Activated B cell treated with CpG ODN at 0.5 μM for 24 hours (primary cell): ENCODE measurements at regions of chr11 and their contacts with region 1.

Region 1: GRCh38 chr11:34653826-34654490 is 33.1 kb downstream of the EHF start:
- DNase-seq: no peak
- ATAC-seq: peak; percentile 65
- H3K4me3 Mint-ChIP-seq: peak overlapping the region; percentile 56
- H3K27ac Mint-ChIP-seq: peak overlapping the region; percentile 80
- H3K4me1 Mint-ChIP-seq: peaks cover 54% of the 10 kb centered on the region
- H3K27me3 Mint-ChIP-seq: no peaks in the 10 kb centered on the region
- CTCF ChIP-seq: no peak

Region 2: GRCh38 chr11:34512840-34513681 is 140.9 kb before region 1 on chr11:
- CTCF ChIA-PET with region 1: interaction called, 3 read pairs
- POLR2A ChIA-PET with region 1: no interaction called
- intact Hi-C with region 1: loop called (anchors 2 kb)
- DNase-seq: peak; percentile 44
- ATAC-seq: peak; percentile 99
- H3K4me3 Mint-ChIP-seq: no peak overlapping the region
- H3K27ac Mint-ChIP-seq: no peak overlapping the region
- H3K4me1 Mint-ChIP-seq: no peaks in the 10 kb centered on the region
- H3K27me3 Mint-ChIP-seq: no peaks in the 10 kb centered on the region
- CTCF ChIP-seq: peak; percentile 35

Region 3: DNA sequence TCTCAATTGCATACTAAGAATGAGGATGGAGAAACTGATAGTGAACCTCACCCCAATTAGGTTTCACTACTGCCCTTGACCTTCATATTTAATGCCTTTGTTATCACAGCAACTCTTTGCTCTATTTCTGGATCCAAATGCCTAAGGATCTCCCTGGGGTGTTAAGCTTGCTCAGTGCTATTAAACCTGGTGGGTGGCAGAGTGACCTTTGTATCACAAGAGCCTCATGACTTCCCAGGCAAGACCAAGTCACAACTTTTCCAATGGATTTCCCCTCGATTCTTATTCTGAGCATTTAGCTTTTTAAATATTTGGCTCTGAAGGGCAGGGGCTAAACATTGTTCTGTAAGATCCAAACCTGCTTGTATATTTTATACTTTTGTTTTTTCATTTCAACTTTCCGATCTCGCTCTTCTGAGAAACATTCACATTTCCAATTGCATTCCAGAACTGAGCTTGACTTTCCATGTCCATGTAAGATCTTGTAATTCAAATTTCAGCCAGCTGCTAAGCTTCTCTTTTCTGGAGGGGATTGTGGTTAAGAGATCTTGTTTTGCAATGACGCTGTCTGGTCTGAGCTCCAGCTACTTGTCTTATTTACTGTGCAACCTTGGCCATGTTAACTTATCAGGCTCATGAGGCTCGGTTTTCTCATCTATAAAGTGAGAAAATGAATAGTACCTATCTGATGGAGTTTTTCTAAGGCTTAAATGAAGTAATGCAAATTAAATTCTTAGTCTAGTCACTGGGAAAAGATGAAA is 39.4 kb before region 1 on chr11:
- CTCF ChIA-PET with region 1: interaction called, 4 read pairs
- POLR2A ChIA-PET with region 1: interaction called, 38 read pairs
- intact Hi-C with region 1: loop called (anchors 1 kb)
- DNase-seq: no peak
- ATAC-seq: peak; percentile 53
- H3K4me3 Mint-ChIP-seq: peak overlapping the region; percentile 0
- H3K27ac Mint-ChIP-seq: peak overlapping the region; percentile 86
- H3K4me1 Mint-ChIP-seq: peaks cover 30% of the 10 kb centered on the region
- H3K27me3 Mint-ChIP-seq: no peaks in the 10 kb centered on the region
- CTCF ChIP-seq: no peak

Region 4: DNA sequence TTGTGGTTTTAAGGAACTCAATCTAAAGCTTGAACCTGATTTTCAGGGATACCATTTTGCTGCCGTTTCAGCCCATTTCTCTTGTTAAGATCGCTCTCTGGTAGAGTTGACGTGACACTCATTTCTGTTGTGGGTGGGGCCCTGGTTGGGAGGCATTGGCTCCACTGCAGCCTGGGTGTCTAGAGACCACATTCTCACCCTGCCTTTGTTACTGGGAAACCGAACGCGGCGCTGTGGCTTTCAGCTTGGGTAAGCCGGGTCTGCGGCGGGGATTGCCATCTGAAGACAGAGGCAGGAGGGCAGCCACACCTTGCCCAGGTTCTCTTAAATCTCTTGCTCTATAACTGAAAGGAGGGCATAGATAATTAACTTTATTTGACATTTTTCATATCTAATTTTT is 29.9 kb before region 1 on chr11:
- CTCF ChIA-PET with region 1: no interaction called
- POLR2A ChIA-PET with region 1: interaction called, 37 read pairs
- intact Hi-C with region 1: loop called (anchors 1 kb)
- DNase-seq: peak; percentile 46
- ATAC-seq: peak; percentile 94
- H3K4me3 Mint-ChIP-seq: peak overlapping the region; percentile 66
- H3K27ac Mint-ChIP-seq: peak overlapping the region; percentile 37
- H3K4me1 Mint-ChIP-seq: peaks cover 31% of the 10 kb centered on the region
- H3K27me3 Mint-ChIP-seq: peaks cover 6% of the 10 kb centered on the region
- CTCF ChIP-seq: no peak

Region 5: GRCh38 chr11:34633990-34634693 is 19.8 kb before region 1 on chr11:
- CTCF ChIA-PET with region 1: interaction called, 5 read pairs
- POLR2A ChIA-PET with region 1: interaction called, 13 read pairs
- intact Hi-C with region 1: loop called (anchors 1 kb)
- DNase-seq: no peak
- ATAC-seq: peak; percentile 84
- H3K4me3 Mint-ChIP-seq: peak overlapping the region; percentile 21
- H3K27ac Mint-ChIP-seq: peak overlapping the region; percentile 85
- H3K4me1 Mint-ChIP-seq: peaks cover 16% of the 10 kb centered on the region
- H3K27me3 Mint-ChIP-seq: no peaks in the 10 kb centered on the region
- CTCF ChIP-seq: no peak

Region 6: GRCh38 chr11:34685864-34686263 is 31.9 kb after region 1 on chr11:
- CTCF ChIA-PET with region 1: no interaction called
- POLR2A ChIA-PET with region 1: no interaction called
- intact Hi-C with region 1: loop called (anchors 2 kb)
- DNase-seq: no peak
- ATAC-seq: no peak
- H3K4me3 Mint-ChIP-seq: no peak overlapping the region
- H3K27ac Mint-ChIP-seq: no peak overlapping the region
- H3K4me1 Mint-ChIP-seq: peaks cover 6% of the 10 kb centered on the region
- H3K27me3 Mint-ChIP-seq: no peaks in the 10 kb centered on the region
- CTCF ChIP-seq: no peak

Region 7: DNA sequence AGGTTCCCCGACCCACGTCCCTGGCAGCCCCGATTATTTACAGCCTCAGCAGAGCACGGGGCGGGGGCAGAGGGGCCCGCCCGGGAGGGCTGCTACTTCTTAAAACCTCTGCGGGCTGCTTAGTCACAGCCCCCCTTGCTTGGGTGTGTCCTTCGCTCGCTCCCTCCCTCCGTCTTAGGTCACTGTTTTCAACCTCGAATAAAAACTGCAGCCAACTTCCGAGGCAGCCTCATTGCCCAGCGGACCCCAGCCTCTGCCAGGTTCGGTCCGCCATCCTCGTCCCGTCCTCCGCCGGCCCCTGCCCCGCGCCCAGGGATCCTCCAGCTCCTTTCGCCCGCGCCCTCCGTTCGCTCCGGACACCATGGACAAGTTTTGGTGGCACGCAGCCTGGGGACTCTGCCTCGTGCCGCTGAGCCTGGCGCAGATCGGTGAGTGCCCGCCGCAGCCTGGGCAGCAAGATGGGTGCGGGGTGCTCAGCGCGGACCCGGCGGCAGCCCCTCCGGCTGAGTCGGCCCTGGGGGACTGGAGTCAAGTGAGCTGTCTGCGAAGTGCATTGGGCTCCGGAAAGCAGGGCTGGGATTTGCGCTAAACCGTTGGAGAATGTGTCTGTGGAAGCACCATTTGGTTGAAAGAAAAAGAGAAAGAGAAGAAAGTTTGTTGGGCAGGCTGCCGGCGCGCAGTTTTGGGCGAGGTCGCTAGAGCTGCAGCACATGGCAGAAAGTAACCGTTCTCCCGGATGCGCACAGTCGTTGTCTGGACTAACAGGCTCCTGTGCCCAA is 485.2 kb after region 1 on chr11 and contains the start of gene CD44:
- CTCF ChIA-PET with region 1: no interaction called
- POLR2A ChIA-PET with region 1: no interaction called
- intact Hi-C with region 1: no loop called
- DNase-seq: peak; percentile 68
- ATAC-seq: peak; percentile 79
- H3K4me3 Mint-ChIP-seq: peak within 1 kb of the TSS; percentile 97
- H3K27ac Mint-ChIP-seq: peak within 1 kb of the TSS; percentile 98
- H3K4me1 Mint-ChIP-seq: peaks cover 57% of the 10 kb centered on the region
- H3K27me3 Mint-ChIP-seq: no peaks in the 10 kb centered on the region
- CTCF ChIP-seq: no peak
- total RNA-seq, gene CD44: 1,441 and 1,546 TPM in 2 replicates